ENCODE measurements at regions of chr11 and their contacts with region 1.

Region 1: GRCh38 chr11:13210424-13210823 is 67.2 kb upstream of the BMAL1 start:
- DNase-seq: peak; percentile 41 to 72 (median 58)
- ATAC-seq: peak; percentile 79 to 82 (median 80)
- H3K4me3 ChIP-seq: no peak overlapping the region
- H3K27ac ChIP-seq: no peak overlapping the region
- H3K4me1 ChIP-seq: peaks cover 0 to 6% (median 0%) of the 10 kb centered on the region in 4 donors
- H3K27me3 ChIP-seq: no peaks in the 10 kb centered on the region
- CTCF ChIP-seq: peak; percentile 61 to 75 (median 69)
- POLR2A ChIP-seq: no peak

Region 2: DNA sequence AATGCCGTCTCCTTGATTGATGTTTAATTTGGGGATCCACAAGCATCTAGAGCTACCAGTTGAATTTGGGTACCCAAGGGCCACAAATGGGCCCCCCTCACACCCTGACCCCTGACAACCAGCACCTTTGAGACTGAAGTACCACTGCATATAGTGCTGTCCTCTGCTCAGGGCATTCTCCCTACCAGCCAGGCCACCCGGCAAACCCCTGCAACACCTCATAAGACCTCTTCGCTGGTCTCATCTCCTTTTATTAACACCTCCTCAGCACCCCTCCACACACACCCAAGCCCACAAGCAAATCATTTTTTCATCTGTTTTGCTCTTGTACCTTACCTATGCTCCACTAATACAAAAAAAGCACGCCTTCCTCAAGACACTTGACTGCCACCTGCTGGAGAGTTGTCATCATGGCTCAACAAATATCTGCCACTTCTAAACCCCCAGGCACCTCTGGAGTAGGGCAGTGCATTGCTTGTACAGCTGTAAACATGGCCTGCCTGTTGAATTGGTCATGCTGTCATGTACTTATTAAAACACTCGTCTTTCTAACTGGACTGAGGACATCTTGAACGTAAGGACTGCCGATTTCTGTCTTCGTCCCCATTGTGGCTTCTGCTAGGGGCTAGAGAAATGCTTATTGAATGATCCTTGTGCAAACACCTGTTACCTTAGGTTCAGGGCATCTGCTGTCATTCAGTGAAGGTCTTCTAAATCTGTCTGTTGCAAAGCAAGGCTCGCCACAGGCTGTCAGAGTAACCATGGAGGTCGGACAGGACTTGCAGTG is 133.7 kb after region 1 on chr11:
- intact Hi-C with region 1: loop called (anchors 5 kb)
- DNase-seq: peak in 2 of 3 donors; percentile 36 to 69
- ATAC-seq: peak; percentile 51 to 66 (median 58)
- H3K4me3 ChIP-seq: no peak overlapping the region
- H3K27ac ChIP-seq: no peak overlapping the region
- H3K4me1 ChIP-seq: peaks cover 0 to 29% (median 13%) of the 10 kb centered on the region in 4 donors
- H3K27me3 ChIP-seq: no peaks in the 10 kb centered on the region
- CTCF ChIP-seq: peak; percentile 75 to 78 (median 78)
- POLR2A ChIP-seq: no peak

Measured in right lobe of liver (tissue), 6 donors.